Gastrocnemius medialis (tissue), 4 donors: ENCODE measurements at regions of chr6 and their contacts with region 1.

Region 1: GRCh38 chr6:37134606-37135191 is 35.3 kb upstream of the PIM1 start:
- DNase-seq: peak; percentile 74 to 76
- ATAC-seq: peak; percentile 68 to 82
- H3K4me3 ChIP-seq: no peak overlapping the region
- H3K27ac ChIP-seq: peak overlapping the region; percentile 91 to 95 (median 93)
- H3K4me1 ChIP-seq: peaks cover 39 to 47% of the 10 kb centered on the region in 2 donors
- H3K27me3 ChIP-seq: no peaks in the 10 kb centered on the region
- CTCF ChIP-seq: no peak
- POLR2A ChIP-seq: no peak

Region 2: DNA sequence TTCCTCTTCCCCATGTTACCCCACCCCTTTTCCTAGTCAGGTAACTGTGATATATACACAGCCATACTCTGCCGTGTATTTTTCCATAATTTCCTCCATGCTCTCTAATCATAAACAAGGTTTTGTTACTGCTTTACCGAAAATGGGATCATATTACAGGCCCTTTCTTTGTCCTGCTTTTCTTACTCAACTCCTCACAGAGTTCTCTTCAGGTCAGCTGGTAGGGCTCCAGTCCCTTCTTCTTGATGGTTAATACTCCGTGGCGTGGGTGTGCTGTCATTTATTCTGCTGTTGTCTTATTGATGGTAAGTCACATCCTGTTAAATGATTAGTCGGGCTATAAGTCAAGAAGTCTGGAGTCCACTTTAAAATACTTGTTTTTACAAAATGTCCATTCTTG is 205.1 kb before region 1 on chr6:
- in situ Hi-C with region 1: no loop called
- intact Hi-C with region 1: no loop called
- DNase-seq: peak in 1 of 2 donors; percentile 54
- ATAC-seq: peak; percentile 47 to 55
- H3K4me3 ChIP-seq: no peak overlapping the region
- H3K27ac ChIP-seq: peak overlapping the region; percentile 72 to 89 (median 80)
- H3K4me1 ChIP-seq: peaks cover 38 to 40% of the 10 kb centered on the region in 2 donors
- H3K27me3 ChIP-seq: no peaks in the 10 kb centered on the region
- CTCF ChIP-seq: no peak
- POLR2A ChIP-seq: no peak

Region 3: GRCh38 chr6:36985808-36986703 is 148.6 kb before region 1 on chr6 and contains the start of gene MTCH1:
- in situ Hi-C with region 1: no loop called
- intact Hi-C with region 1: loop called (anchors 5 kb)
- DNase-seq: peak; percentile 84 to 88
- ATAC-seq: peak; percentile 95 to 96
- H3K4me3 ChIP-seq: peak within 1 kb of the TSS; percentile 96 to 99 (median 98)
- H3K27ac ChIP-seq: peak within 1 kb of the TSS; percentile 92 to 99 (median 96)
- H3K4me1 ChIP-seq: peaks cover 33 to 37% of the 10 kb centered on the region in 2 donors
- H3K27me3 ChIP-seq: no peaks in the 10 kb centered on the region
- CTCF ChIP-seq: peak in 2 of 5 experiments; percentile 29 to 34
- POLR2A ChIP-seq: peak; percentile 97 to 98
- total RNA-seq, gene MTCH1: 85.6 to 127 (median 116) TPM

Region 4: GRCh38 chr6:37059344-37060206 is 75.1 kb before region 1 on chr6:
- in situ Hi-C with region 1: no loop called
- intact Hi-C with region 1: loop called (anchors 1 kb)
- DNase-seq: peak; percentile 40 to 63
- ATAC-seq: peak; percentile 42 to 48
- H3K4me3 ChIP-seq: no peak overlapping the region
- H3K27ac ChIP-seq: peak overlapping the region; percentile 86 to 89 (median 86)
- H3K4me1 ChIP-seq: peaks cover 31 to 34% of the 10 kb centered on the region in 2 donors
- H3K27me3 ChIP-seq: no peaks in the 10 kb centered on the region
- CTCF ChIP-seq: peak in 4 of 5 experiments; percentile 19 to 60 (median 32)
- POLR2A ChIP-seq: peak in 1 of 2 donors; percentile 41

Region 5: GRCh38 chr6:37102279-37103168 is 32.2 kb before region 1 on chr6:
- in situ Hi-C with region 1: no loop called
- intact Hi-C with region 1: loop called (anchors 1 kb)
- DNase-seq: peak; percentile 81 to 86
- ATAC-seq: peak; percentile 67 to 70
- H3K4me3 ChIP-seq: peak overlapping the region; percentile 33 to 60 (median 49)
- H3K27ac ChIP-seq: peak overlapping the region; percentile 86 to 95 (median 90)
- H3K4me1 ChIP-seq: peaks cover 27 to 40% of the 10 kb centered on the region in 2 donors
- H3K27me3 ChIP-seq: no peaks in the 10 kb centered on the region
- CTCF ChIP-seq: peak in 1 of 5 experiments; percentile 10
- POLR2A ChIP-seq: peak; percentile 62 to 66

Region 6: GRCh38 chr6:37324131-37325033 is 189.7 kb after region 1 on chr6:
- in situ Hi-C with region 1: no loop called
- intact Hi-C with region 1: no loop called
- DNase-seq: no peak
- ATAC-seq: no peak
- H3K4me3 ChIP-seq: no peak overlapping the region
- H3K27ac ChIP-seq: no peak overlapping the region
- H3K4me1 ChIP-seq: no peaks in the 10 kb centered on the region
- H3K27me3 ChIP-seq: no peaks in the 10 kb centered on the region
- CTCF ChIP-seq: no peak
- POLR2A ChIP-seq: no peak